ENCODE measurements at regions of chr3 and their contacts with region 1.

Region 1: DNA sequence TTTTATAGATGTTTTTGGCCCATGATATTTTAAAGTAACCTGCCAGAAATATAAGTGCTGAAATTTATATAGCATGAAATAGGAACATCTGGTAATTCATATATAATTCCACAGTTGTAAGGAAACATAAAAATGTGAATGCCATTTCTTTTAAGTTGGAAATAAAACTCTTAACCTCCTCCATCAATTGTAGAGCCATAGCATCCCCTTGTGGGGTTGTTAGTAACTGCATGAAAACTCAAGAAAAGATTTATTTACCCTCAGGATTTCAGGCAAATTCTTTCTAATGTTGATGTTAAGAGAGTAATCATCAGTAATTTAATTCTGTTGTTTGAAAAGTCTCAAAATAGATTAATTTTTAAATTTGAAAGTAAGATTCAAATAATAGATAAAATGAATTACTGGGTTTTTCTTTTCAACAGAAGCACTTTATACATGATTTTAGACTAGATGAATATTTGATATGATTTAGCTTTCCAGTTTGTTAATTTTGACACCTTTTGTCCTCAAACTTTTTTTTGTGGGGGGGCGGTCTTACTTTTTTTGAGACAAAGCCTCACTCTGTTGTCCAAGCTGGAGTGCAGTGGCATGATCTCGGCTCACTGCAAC is 74.7 kb downstream of the RASA2 start:
- DNase-seq: peak in 1 of 3 donors; percentile 73
- ATAC-seq: peak; percentile 57
- H3K4me3 ChIP-seq: no peak overlapping the region
- H3K4me1 ChIP-seq: no peaks in the 10 kb centered on the region
- CTCF ChIP-seq: peak; percentile 78

Region 2: GRCh38 chr3:141303481-141304223 is 257.9 kb before region 1 on chr3:
- intact Hi-C with region 1: loop called in 1 of 2 experiments (anchors 5 kb)
- DNase-seq: peak in 1 of 3 donors; percentile 90
- ATAC-seq: peak; percentile 87
- H3K4me3 ChIP-seq: no peak overlapping the region
- H3K4me1 ChIP-seq: peaks cover 3% of the 10 kb centered on the region
- CTCF ChIP-seq: peak; percentile 65

Region 3: GRCh38 chr3:141471160-141471559 is 90.4 kb before region 1 on chr3:
- intact Hi-C with region 1: loop called (anchors 5 kb)
- DNase-seq: no peak
- ATAC-seq: no peak
- H3K4me3 ChIP-seq: no peak overlapping the region
- H3K4me1 ChIP-seq: no peaks in the 10 kb centered on the region
- CTCF ChIP-seq: no peak

Measured in mucosa of descending colon (tissue), 3 donors.